ENCODE measurements at regions of chr12 and their contacts with region 1.

Region 1: DNA sequence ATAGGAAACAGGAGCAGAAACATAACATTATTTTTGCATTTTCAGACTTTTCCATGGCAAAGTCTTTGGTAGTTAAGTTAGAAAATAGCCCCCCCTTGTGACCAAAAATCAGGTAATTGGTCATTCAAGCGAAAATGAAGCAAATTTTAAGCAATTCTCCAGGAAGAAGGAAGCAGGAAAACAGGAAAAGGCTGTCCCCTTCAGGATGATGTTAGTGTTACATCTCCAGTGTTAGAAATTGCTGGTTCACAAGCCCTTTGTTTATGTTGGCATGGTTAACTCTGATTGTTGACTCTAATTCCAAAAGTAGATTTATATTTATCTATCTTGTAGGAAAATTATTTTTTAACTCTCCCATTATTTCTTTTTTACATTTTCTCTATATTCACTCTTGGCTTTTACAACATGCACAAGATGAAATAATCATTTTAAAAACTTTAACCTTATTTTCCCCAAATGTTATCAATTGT is 18.8 kb upstream of the GAS2L3 start:
- DNase-seq: no peak
- ATAC-seq: peak; percentile 89

Region 2: GRCh38 chr12:100234598-100235304 is 319.9 kb before region 1 on chr12:
- intact Hi-C with region 1: loop called (anchors 10 kb)
- DNase-seq: no peak
- ATAC-seq: peak; percentile 61

Region 3: DNA sequence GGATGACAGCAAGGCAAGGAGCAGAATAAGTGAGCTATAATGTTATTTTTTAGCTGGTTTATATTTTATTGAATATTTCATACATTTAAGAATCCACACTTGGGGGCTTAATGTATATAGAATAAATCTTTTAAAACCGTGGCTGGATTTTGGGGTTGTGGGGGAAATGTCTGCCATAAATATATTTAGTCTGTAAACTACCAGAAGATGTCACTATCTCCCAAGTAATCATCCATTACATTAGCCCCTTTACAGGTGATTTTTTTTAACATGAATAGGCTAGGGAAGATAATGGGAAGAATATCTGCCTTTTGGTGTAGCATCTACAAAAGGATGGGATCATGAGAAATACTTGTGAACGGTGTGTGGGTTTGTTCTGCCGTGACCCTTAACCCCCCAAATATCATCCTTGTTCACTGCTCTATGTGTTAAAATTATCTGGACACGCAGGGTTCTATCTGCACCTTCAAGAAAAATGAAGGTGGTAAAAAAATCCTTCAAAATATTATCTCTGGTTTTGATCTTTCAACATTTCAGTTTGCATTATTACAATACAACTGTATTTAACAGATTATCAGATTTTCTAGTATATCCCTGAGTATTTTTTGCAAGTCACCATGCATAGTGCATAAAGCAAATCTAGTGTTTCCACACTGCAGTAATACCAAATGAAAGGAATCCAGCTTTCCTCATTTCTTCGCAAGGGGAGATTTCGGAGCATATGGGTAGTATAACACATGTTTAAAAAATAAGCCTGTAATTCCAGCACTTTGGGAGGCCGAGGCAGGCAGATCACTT is 205.8 kb before region 1 on chr12:
- intact Hi-C with region 1: loop called (anchors 10 kb)
- DNase-seq: no peak
- ATAC-seq: no peak

Region 4: GRCh38 chr12:100936661-100937060 is 382.0 kb after region 1 on chr12:
- intact Hi-C with region 1: no loop called
- DNase-seq: no peak
- ATAC-seq: no peak